ENCODE measurements at regions of chr9 and their contacts with region 1.

Region 1: GRCh38 chr9:37209431-37210386 is 89.3 kb downstream of the ZCCHC7 start:
- DNase-seq: peak in 2 of 4 experiments; percentile 30 to 54
- ATAC-seq: peak; percentile 78
- H3K4me3 ChIP-seq: no peak overlapping the region
- H3K27ac ChIP-seq: peak overlapping the region; percentile 51; the same call in 2 of the 3 replicates
- H3K4me1 ChIP-seq: peaks cover 6 to 8% of the 10 kb centered on the region in 2 experiments; a peak in 3 of 5 replicates
- H3K27me3 ChIP-seq: no peaks in the 10 kb centered on the region
- CTCF ChIP-seq: peak; percentile 18 to 49 (median 30); a peak in 3 of 6 replicates
- EP300 ChIP-seq: no peak
- POLR2A ChIP-seq: no peak
- RAD21 ChIP-seq: peak in 1 of 2 experiments; percentile 51; a peak in 2 of 4 replicates

Region 2: GRCh38 chr9:37180138-37180537 is 29.6 kb before region 1 on chr9:
- CTCF ChIA-PET with region 1: no interaction called
- POLR2A ChIA-PET with region 1: no interaction called
- in situ Hi-C with region 1: no loop called
- intact Hi-C with region 1: no loop called
- DNase-seq: no peak
- ATAC-seq: no peak
- H3K4me3 ChIP-seq: no peak overlapping the region
- H3K27ac ChIP-seq: no peak overlapping the region
- H3K4me1 ChIP-seq: no peaks in the 10 kb centered on the region; a peak in 1 of 5 replicates
- H3K27me3 ChIP-seq: no peaks in the 10 kb centered on the region
- CTCF ChIP-seq: no peak
- EP300 ChIP-seq: no peak
- POLR2A ChIP-seq: no peak
- RAD21 ChIP-seq: no peak

Region 3: DNA sequence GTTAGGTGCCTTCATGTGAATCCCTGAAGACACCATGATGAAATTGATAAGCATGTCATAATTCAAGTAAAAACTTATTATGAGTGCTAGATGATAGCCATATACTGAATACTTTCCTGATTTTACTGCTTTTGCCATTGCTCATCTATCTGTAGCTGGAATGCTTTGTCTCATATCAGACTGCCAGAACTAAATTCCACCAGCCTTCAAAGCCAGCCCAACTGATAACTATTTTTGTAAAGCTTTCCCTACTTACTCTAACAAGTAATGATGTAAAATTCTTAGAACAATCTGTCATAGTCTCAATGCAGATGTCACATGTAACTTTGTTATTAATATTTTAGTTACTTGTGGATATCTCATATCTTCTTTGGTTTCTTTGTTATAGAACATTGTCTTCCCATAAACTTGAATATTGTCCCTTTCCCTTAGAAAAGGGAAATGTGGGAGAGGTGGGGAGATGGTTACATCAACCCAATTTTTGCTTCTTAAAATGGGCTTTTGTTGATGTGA is 39.0 kb after region 1 on chr9:
- CTCF ChIA-PET with region 1: no interaction called
- POLR2A ChIA-PET with region 1: no interaction called
- in situ Hi-C with region 1: no loop called
- intact Hi-C with region 1: loop called (anchors 5 kb)
- DNase-seq: peak in 1 of 4 experiments; percentile 38
- ATAC-seq: no peak
- H3K4me3 ChIP-seq: no peak overlapping the region
- H3K27ac ChIP-seq: peak overlapping the region; percentile 60; the same call in 2 of the 3 replicates
- H3K4me1 ChIP-seq: peaks cover 5 to 38% of the 10 kb centered on the region in 2 experiments; a peak in 4 of 5 replicates
- H3K27me3 ChIP-seq: no peaks in the 10 kb centered on the region
- CTCF ChIP-seq: no peak
- EP300 ChIP-seq: peak; percentile 15; the same call in 1 of the 2 replicates
- POLR2A ChIP-seq: no peak
- RAD21 ChIP-seq: no peak

Region 4: DNA sequence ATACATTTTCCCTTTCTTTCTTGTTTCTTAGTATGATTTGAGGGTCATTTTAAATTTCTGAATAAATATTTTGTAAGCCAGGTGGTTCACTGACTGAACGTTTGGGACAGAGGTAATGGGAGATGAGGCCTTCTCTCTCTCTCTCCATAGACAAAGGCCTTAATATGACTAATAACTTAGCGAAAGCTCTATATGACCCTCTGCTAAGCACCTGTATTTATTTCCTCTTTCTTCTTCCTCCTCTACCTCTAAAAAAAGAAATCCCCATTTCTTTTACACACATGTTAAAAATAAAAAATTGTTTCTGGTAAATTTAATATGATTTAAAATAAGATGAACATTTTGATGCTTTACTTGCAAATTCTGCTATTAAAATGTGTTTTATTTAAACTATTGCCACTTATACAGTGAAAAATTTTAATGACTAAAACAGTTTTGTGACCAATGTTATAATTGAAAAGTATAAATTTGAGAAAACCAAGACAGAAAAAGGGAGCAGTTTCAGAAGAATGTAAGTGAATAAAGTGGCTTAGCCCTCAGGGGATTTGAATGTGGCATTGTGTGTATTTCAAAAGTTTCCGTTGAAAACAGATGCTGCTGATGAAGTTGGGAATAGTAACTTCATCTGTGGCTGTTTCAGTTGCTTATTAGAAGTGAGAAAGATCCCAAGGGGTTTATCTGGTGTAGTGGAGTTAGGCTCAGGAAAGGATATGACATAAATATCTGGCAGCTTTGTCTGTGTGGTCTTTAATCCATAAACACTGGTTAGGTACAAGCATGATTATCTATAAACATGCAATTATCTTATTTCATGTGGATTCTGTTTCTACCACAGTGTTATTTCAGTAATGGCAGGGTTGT is 84.2 kb after region 1 on chr9:
- CTCF ChIA-PET with region 1: no interaction called
- POLR2A ChIA-PET with region 1: no interaction called
- in situ Hi-C with region 1: no loop called
- intact Hi-C with region 1: loop called (anchors 5 kb)
- DNase-seq: peak in 1 of 4 experiments; percentile 18
- ATAC-seq: no peak; the same call in 1 of the 3 replicates
- H3K4me3 ChIP-seq: no peak overlapping the region
- H3K27ac ChIP-seq: peak overlapping the region; percentile 4; the same call in 1 of the 3 replicates
- H3K4me1 ChIP-seq: peaks cover 0 to 33% of the 10 kb centered on the region in 2 experiments; a peak in 4 of 5 replicates
- H3K27me3 ChIP-seq: no peaks in the 10 kb centered on the region
- CTCF ChIP-seq: no peak
- EP300 ChIP-seq: no peak
- POLR2A ChIP-seq: no peak
- RAD21 ChIP-seq: no peak

Measured in K562 (cell line).